ENCODE measurements at regions of chr15 and their contacts with region 1.

Region 1: DNA sequence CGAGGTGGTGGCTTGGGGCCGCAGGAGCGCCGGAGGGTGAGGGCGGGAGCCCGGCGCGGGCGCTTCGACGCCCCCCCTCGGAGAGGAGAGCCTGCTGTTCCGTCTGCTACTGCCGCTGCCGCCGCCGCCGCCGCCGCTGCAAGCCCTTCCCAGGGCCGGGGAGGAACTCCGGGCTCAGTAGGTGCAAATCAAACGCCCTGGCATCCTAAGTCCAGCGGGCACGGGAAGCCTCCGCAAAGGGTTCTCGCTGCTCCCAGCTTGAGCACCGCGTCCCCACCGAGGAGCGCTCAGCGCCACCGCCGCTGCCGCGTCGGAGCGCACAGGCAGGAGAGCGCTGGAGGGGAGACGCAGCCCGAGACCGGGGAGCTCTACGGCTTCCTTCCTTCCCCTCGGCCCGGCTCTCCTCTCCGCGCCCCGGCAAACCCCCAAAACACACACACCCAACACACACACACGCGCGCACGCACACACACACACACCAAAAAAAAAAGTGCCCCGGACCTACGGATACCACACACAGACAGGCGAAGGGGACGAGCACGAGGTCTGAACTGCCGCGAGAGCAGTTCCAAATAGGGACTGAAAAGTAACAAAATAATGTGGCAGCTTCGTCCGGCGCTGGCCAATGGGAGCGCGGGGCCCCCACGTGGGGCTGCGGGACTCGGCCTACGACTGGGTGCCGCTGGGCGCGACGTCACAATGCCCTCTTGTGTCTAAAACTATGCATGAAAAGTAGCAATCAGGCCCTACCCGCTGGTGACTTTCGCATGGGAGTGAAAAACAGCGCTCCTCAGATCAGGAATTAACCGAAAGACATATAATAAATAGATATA is at the start of gene TLE3:
- DNase-seq: peak; percentile 100
- H3K4me3 ChIP-seq: peak within 1 kb of the TSS; percentile 90 to 97 (median 94)
- H3K27ac ChIP-seq: peak within 1 kb of the TSS; percentile 92 to 98 (median 96)
- H3K4me1 ChIP-seq: peaks cover 65 to 76% (median 74%) of the 10 kb centered on the region in 4 donors
- H3K27me3 ChIP-seq: no peaks in the 10 kb centered on the region
- CTCF ChIP-seq: peak in 2 of 3 experiments; percentile 34 to 49
- EP300 ChIP-seq: no peak
- POLR2A ChIP-seq: peak; percentile 83
- total RNA-seq, gene TLE3: 35.7 to 81.3 (median 59.2) TPM

Region 2: DNA sequence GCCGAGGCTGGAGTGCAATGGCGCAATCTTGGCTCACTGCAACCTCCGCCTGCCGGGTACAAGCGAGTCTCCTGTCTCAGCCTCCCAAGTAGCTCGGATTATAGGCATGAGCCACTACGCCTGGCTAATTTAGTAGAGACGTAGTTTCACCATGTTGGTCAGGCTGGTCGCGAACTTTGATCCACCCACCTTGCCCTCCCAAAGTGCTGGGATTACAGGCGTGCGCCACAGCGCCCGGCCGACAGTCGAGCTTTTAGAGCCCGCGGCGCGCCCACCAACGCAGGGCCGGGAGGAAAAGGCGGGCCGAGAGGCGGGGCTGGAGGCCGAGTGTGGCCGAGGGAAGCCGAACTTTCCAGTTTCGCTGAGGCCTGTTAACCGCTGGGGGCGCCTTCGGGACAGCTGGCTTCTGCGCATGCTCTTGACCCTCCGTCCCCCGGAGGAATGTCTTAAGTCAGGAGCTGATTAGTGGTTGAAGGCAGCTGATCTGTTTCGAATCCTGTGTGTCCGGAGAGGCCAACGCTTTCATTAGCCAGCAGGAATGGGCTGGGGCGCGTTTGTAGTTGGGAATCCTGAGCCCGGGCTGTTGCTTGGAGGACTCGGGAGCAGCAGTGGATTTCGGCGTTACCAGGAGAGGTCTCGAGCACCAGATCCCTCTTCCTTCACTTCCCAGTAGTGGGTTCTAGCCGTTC is 634.9 kb before region 1 on chr15:
- intact Hi-C with region 1: loop called (anchors 5 kb)
- DNase-seq: peak; percentile 98
- H3K4me3 ChIP-seq: peak overlapping the region; percentile 52 to 63 (median 60)
- H3K27ac ChIP-seq: peak overlapping the region; percentile 91 to 94 (median 93)
- H3K4me1 ChIP-seq: peaks cover 14 to 53% (median 37%) of the 10 kb centered on the region in 4 donors
- H3K27me3 ChIP-seq: no peaks in the 10 kb centered on the region
- CTCF ChIP-seq: peak; percentile 79 to 95 (median 90)
- EP300 ChIP-seq: no peak
- POLR2A ChIP-seq: peak; percentile 38

Region 3: DNA sequence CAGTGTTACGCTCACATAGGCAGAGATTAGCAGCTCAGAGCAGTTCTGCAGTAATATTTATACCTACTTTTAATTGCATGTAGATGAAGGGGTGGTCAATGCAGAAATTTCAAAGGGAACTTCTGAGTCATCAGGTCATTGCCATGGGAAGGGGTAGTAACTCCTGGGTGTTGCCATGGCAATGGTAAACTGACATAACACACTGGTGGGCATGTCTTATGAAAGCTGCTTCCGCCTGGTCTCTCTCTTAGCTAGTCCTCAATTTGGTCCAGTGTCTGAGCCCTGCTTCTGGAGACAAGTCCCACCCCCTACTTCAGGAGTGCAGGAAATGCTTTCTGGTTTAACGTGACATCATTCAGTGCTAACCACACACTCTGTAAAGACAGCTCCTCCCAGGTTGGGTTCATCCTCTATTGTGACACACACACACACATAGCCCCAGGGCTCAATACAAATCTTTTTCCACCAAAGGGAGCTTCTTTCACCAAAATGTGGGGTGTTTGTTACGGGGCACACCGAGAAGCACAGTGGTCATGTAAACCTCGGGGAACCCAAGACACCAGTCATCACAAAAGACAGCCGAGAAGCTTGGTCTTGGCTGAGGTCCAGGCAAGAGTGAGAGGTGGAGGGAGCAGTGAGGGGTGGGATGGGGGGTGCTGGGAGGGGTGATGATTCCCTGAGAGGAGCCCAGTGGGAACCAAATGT is 74.3 kb before region 1 on chr15:
- intact Hi-C with region 1: loop called (anchors 10 kb)
- DNase-seq: no peak
- H3K4me3 ChIP-seq: peak overlapping the region in 1 of 4 donors; percentile 20
- H3K27ac ChIP-seq: peak overlapping the region; percentile 56 to 80 (median 68)
- H3K4me1 ChIP-seq: peaks cover 16 to 36% (median 29%) of the 10 kb centered on the region in 4 donors
- H3K27me3 ChIP-seq: no peaks in the 10 kb centered on the region
- CTCF ChIP-seq: no peak
- EP300 ChIP-seq: no peak
- POLR2A ChIP-seq: no peak

Region 4: GRCh38 chr15:70036585-70037291 is 60.8 kb before region 1 on chr15:
- intact Hi-C with region 1: no loop called
- DNase-seq: no peak
- H3K4me3 ChIP-seq: no peak overlapping the region
- H3K27ac ChIP-seq: no peak overlapping the region
- H3K4me1 ChIP-seq: peaks cover 3 to 9% (median 7%) of the 10 kb centered on the region in 4 donors
- H3K27me3 ChIP-seq: peaks cover 0 to 20% (median 4%) of the 10 kb centered on the region in 4 donors
- CTCF ChIP-seq: no peak
- EP300 ChIP-seq: no peak
- POLR2A ChIP-seq: no peak

Region 5: DNA sequence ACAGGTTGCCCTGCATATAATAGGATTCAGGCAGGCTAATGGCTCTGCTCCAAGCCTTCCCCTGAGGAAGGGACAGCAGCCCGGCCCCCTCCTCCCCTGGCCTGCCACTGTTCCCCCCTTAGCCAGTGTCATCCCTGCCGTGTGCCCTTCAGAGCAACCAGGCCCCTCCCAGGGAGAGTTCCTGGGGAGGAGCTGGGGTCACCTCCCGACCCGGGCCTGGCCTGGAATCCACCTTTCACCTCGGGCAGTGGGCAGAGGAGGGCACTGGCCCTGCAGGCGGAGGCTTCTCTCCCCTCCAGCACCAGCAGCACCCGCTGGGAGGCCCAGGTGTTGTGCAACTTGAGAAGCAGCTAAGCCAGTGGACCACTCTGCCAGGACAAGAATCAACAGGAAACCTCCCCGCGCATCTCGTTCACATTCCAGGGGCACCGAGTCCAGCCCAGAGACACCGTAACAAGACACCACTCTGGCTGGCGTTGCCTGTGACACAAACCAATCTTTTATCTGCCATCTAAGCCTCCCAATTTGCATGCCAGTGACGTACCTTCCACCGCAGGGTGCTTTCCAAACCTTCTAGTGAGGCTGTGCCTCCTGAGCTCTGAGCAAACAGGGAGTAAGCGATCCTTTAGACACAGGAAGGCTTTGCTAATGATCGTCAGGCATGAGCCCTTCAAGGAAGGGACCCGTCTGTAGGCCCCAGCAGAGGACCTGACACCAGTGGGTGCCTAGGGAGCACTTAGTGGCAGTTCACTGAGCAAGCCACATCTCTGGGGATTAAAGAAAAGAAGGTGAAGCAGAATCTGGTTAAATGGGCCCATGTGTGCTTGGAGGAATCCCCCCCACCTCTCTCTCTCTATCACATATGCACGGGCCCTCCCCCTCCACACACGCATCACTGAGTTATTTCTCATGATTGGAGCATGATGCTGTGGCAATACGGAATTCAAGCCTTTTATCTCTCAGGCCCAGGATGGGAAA is 99.0 kb after region 1 on chr15:
- intact Hi-C with region 1: loop called (anchors 5 kb)
- DNase-seq: no peak
- H3K4me3 ChIP-seq: no peak overlapping the region
- H3K27ac ChIP-seq: peak overlapping the region; percentile 55 to 73 (median 66)
- H3K4me1 ChIP-seq: peaks cover 14 to 47% (median 41%) of the 10 kb centered on the region in 4 donors
- H3K27me3 ChIP-seq: no peaks in the 10 kb centered on the region
- CTCF ChIP-seq: no peak
- EP300 ChIP-seq: no peak
- POLR2A ChIP-seq: no peak

Region 6: GRCh38 chr15:70245932-70246331 is 148.4 kb after region 1 on chr15:
- intact Hi-C with region 1: no loop called
- DNase-seq: no peak
- H3K4me3 ChIP-seq: no peak overlapping the region
- H3K27ac ChIP-seq: no peak overlapping the region
- H3K4me1 ChIP-seq: no peaks in the 10 kb centered on the region
- H3K27me3 ChIP-seq: no peaks in the 10 kb centered on the region
- CTCF ChIP-seq: no peak
- EP300 ChIP-seq: no peak
- POLR2A ChIP-seq: no peak

Region 7: GRCh38 chr15:70271422-70272088 is 174.0 kb after region 1 on chr15:
- intact Hi-C with region 1: loop called (anchors 5 kb)
- DNase-seq: no peak
- H3K4me3 ChIP-seq: no peak overlapping the region
- H3K27ac ChIP-seq: peak overlapping the region; percentile 35 to 72 (median 48)
- H3K4me1 ChIP-seq: peaks cover 38 to 45% (median 42%) of the 10 kb centered on the region in 4 donors
- H3K27me3 ChIP-seq: no peaks in the 10 kb centered on the region
- CTCF ChIP-seq: no peak
- EP300 ChIP-seq: no peak
- POLR2A ChIP-seq: no peak

Region 8: DNA sequence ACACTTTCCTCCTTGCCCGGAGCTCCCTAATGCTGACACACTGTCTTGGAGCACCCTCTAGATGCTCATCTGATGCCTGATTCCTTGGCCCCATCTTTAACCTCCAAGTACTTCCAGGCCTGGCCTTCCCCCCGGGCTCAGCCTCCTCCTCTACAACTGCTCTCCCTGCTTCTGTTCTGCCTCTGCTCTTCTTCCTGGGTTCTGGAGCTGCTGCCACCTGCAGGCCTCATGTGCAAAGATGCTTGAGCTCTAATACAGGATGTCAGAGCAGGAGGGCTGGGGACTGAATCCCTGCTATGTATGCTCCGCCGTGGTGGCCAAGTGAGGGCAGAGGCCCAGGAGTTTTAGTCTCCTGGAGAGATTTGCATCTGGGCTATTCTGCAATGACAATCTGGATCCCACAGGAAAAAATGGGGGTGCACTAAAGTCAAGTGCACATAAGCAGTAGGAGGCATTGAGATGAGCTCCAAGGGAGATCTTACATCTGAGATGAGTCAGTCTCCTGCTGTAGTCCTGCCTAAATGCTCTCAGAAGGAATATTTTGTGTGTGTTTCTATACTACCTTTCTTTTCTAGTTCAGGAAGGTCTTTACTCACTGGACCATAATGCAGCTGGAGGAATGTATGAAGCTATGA is 369.5 kb after region 1 on chr15:
- intact Hi-C with region 1: loop called (anchors 10 kb)
- DNase-seq: no peak
- H3K4me3 ChIP-seq: no peak overlapping the region
- H3K27ac ChIP-seq: no peak overlapping the region
- H3K4me1 ChIP-seq: peaks cover 0 to 9% (median 0%) of the 10 kb centered on the region in 4 donors
- H3K27me3 ChIP-seq: peaks cover 0 to 2% (median 0%) of the 10 kb centered on the region in 4 donors
- CTCF ChIP-seq: peak; percentile 22 to 58 (median 48)
- EP300 ChIP-seq: no peak
- POLR2A ChIP-seq: no peak

Measured in esophagus muscularis mucosa (tissue), 4 donors.